Activated B cell treated with CpG ODN at 0.5 μM for 24 hours (primary cell): ENCODE measurements at regions of chr10 and their contacts with region 1.

Region 1: DNA sequence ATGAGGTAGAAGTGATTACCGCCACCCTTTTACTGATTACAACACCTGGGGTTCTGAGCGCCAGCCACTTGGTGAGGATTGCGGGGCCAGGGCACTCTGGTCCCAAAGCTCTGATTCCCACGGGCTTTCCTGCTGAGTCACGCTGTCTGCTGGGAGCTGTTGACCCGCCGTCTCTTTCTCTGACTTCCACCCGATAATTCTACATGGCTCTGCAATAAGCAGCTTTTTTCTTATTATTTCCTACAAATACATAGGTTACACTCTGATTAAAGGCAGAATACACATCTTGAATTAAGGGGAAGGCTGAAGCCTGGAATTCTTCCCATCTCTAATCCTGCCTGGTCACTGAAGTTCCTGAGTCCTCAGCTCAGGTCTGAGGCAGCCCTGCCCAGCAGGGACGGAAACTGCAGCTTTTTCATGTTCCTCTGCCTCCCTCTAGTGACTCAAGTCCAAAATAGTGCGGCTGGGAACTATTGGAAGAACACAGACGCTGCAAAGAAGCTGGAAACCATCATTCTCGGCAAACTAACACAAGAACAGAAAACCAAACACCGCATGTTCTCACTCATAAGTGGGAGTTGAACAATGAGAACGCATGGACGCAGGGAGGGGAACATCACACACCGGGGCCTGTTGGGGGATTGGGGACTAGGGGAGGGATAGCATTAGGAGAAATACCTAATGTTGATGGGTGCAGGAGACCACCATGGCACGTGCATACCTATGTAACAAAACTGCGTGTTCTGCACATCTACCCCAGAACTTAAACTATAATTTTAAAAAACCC is 178.3 kb downstream of the PRKCQ start:
- DNase-seq: no peak
- ATAC-seq: peak; percentile 93
- H3K4me3 Mint-ChIP-seq: peak overlapping the region; percentile 75
- H3K27ac Mint-ChIP-seq: no peak overlapping the region
- H3K4me1 Mint-ChIP-seq: peaks cover 33% of the 10 kb centered on the region
- H3K27me3 Mint-ChIP-seq: peaks cover 6% of the 10 kb centered on the region
- CTCF ChIP-seq: peak; percentile 57

Region 2: DNA sequence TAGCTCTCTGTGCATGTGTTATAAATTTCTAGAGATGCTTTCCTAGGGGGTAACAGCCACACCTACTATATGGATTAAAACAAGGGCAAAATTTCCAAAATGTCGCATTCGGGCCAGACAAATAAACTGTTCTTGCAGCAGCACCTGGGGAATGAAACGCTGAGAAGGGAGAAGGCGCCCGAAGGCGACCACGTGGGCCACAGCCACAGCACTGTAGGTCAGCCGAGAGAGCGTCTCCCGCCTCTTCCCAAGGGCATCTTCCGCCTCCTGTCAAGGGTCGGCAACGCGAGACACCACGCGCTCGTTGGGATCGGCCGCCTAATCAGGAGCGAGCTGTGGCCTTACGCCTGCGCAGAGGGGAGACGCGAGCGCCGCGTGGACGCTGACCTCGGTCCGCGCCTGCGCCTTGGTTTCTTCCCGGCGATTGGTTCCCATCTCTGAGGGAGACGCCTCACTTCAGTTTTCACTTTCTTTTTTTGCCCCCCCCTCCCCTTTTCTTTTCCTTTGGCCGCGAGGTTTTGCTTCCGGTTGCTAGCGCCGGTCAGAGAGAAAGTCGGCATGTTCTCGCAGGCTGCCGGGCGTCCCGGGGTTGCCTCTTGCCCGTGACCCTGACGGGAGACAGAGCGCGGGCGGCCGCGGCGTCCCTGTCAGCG is 717.3 kb before region 1 on chr10 and contains the start of gene TASOR2:
- CTCF ChIA-PET with region 1: no interaction called
- POLR2A ChIA-PET with region 1: no interaction called
- intact Hi-C with region 1: no loop called
- DNase-seq: peak; percentile 94
- ATAC-seq: peak; percentile 83
- H3K4me3 Mint-ChIP-seq: peak within 1 kb of the TSS; percentile 99
- H3K27ac Mint-ChIP-seq: peak within 1 kb of the TSS; percentile 94
- H3K4me1 Mint-ChIP-seq: peaks cover 44% of the 10 kb centered on the region
- H3K27me3 Mint-ChIP-seq: no peaks in the 10 kb centered on the region
- CTCF ChIP-seq: no peak
- total RNA-seq, gene TASOR2: 69.8 and 81.4 TPM in 2 replicates

Region 3: DNA sequence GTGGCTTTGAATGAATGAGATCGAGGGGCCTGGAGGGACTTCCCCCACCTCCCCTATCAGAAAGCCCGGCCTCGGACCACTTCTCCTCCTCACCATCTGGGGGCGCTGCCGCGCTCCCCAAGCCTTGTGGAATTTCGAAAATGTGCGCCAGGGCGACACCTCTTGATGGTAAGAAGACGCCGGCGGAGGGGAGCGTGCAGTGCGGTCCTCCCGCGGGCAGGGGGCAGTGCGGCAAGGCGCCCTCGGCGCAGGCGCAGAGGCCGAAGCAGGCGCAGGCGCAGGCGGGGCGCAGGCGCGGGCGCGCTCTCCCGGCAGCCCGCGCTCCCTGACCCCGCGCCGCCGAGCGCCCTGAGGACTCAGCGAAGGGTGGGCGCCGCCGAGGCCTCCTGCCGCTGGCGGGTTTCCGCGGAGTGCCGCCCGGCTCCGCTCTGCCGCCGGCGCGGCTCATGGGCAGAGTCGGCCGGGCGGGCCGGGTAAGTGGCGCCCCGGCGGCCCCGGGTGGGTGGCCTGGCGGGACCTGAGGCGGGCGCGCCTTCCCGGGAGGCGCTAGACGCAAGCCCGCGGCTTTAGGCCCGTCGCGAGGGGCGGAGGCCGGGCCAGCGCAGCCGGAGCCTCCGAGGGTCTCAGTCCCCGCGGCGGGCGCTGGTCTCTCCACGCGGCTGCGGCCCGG is 312.9 kb before region 1 on chr10 and contains the start of gene RBM17:
- CTCF ChIA-PET with region 1: interaction called, 6 read pairs
- POLR2A ChIA-PET with region 1: interaction called, 4 read pairs
- intact Hi-C with region 1: loop called (anchors 1 kb)
- DNase-seq: peak; percentile 99
- ATAC-seq: peak; percentile 85
- H3K4me3 Mint-ChIP-seq: peak within 1 kb of the TSS; percentile 97
- H3K27ac Mint-ChIP-seq: peak within 1 kb of the TSS; percentile 87
- H3K4me1 Mint-ChIP-seq: peaks cover 69% of the 10 kb centered on the region
- H3K27me3 Mint-ChIP-seq: no peaks in the 10 kb centered on the region
- CTCF ChIP-seq: peak; percentile 99
- total RNA-seq, gene RBM17: 207 and 209 TPM in 2 replicates

Region 4: GRCh38 chr10:6144406-6145165 is 257.2 kb before region 1 on chr10:
- CTCF ChIA-PET with region 1: interaction called, 3 read pairs
- POLR2A ChIA-PET with region 1: interaction called, 3 read pairs
- intact Hi-C with region 1: loop called (anchors 1 kb)
- DNase-seq: peak; percentile 85
- ATAC-seq: peak; percentile 86
- H3K4me3 Mint-ChIP-seq: peak overlapping the region; percentile 88
- H3K27ac Mint-ChIP-seq: peak overlapping the region; percentile 77
- H3K4me1 Mint-ChIP-seq: peaks cover 66% of the 10 kb centered on the region
- H3K27me3 Mint-ChIP-seq: no peaks in the 10 kb centered on the region
- CTCF ChIP-seq: no peak

Region 5: GRCh38 chr10:6202684-6203330 is 198.9 kb before region 1 on chr10 and contains the start of gene PFKFB3:
- CTCF ChIA-PET with region 1: interaction called, 295 read pairs
- POLR2A ChIA-PET with region 1: interaction called, 245 read pairs
- intact Hi-C with region 1: loop called (anchors 1 kb)
- DNase-seq: peak; percentile 96
- ATAC-seq: peak; percentile 72
- H3K4me3 Mint-ChIP-seq: peak within 1 kb of the TSS; percentile 97
- H3K27ac Mint-ChIP-seq: peak within 1 kb of the TSS; percentile 82
- H3K4me1 Mint-ChIP-seq: peaks cover 33% of the 10 kb centered on the region
- H3K27me3 Mint-ChIP-seq: no peaks in the 10 kb centered on the region
- CTCF ChIP-seq: no peak
- total RNA-seq, gene PFKFB3: 96.7 and 105 TPM in 2 replicates

Region 6: DNA sequence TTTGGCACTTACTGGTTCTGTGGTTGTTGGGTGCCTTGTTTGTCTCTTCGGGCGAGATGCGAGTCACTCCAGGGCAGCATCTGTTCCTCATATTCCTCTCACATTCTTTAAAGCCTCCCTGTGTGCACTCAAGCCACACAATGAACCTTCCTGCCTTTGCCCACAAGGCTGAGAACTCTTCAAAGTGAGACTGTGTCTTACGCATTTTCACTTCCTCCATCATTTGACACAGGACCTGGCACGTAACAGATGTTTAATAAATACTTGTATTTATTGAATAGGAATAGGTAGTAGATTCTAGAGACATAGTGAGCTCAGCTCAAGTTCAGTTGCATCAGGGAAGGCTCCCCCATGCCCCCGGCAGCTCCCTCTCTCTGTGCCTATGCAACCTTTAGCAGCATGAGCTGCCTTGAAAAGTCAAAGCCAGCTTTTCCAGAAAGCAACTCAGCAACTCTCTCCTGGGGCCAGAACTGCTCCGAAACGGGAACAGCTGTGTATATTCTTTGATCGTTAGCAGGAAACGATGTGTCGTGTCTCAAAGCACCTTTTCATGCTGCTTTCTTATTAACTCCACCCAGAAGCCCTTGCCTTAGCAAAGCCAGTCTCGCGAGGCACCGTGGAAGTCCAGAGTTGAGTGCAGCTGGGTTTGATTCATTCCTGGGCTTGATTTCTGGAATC is 101.5 kb before region 1 on chr10:
- CTCF ChIA-PET with region 1: interaction called, 19 read pairs
- POLR2A ChIA-PET with region 1: interaction called, 15 read pairs
- intact Hi-C with region 1: loop called (anchors 1 kb)
- DNase-seq: peak; percentile 48
- ATAC-seq: peak; percentile 80
- H3K4me3 Mint-ChIP-seq: peak overlapping the region; percentile 75
- H3K27ac Mint-ChIP-seq: peak overlapping the region; percentile 96
- H3K4me1 Mint-ChIP-seq: peaks cover 82% of the 10 kb centered on the region
- H3K27me3 Mint-ChIP-seq: no peaks in the 10 kb centered on the region
- CTCF ChIP-seq: no peak

Region 7: GRCh38 chr10:6348096-6348874 is 53.5 kb before region 1 on chr10:
- CTCF ChIA-PET with region 1: interaction called, 90 read pairs
- POLR2A ChIA-PET with region 1: interaction called, 95 read pairs
- intact Hi-C with region 1: loop called (anchors 1 kb)
- DNase-seq: peak; percentile 65
- ATAC-seq: peak; percentile 91
- H3K4me3 Mint-ChIP-seq: peak overlapping the region; percentile 80
- H3K27ac Mint-ChIP-seq: peak overlapping the region; percentile 97
- H3K4me1 Mint-ChIP-seq: peaks cover 57% of the 10 kb centered on the region
- H3K27me3 Mint-ChIP-seq: no peaks in the 10 kb centered on the region
- CTCF ChIP-seq: no peak

Region 8: GRCh38 chr10:6423004-6423403 is 21.2 kb after region 1 on chr10:
- CTCF ChIA-PET with region 1: no interaction called
- POLR2A ChIA-PET with region 1: no interaction called
- intact Hi-C with region 1: no loop called
- DNase-seq: no peak
- ATAC-seq: no peak
- H3K4me3 Mint-ChIP-seq: no peak overlapping the region
- H3K27ac Mint-ChIP-seq: no peak overlapping the region
- H3K4me1 Mint-ChIP-seq: no peaks in the 10 kb centered on the region
- H3K27me3 Mint-ChIP-seq: peaks cover 4% of the 10 kb centered on the region
- CTCF ChIP-seq: no peak

Region 9: DNA sequence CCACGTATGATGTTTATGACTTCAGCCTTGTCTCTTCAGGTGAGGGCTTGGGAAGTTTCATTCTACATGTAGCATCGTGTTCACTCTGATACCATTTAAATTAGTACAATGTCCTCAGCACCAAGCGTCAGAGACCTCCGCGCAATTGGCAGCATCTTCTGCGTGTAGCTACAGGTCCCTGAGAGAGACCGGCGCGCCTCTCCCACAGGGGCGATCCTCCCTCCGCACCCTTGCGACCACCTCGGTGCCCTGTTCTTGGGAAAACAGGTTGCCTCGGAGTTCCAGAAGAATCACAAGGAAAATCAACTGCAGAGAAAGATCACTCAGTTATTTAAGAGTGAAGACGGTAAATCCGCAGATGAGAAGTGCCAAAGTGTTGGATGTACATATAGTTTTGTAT is 1858.9 kb after region 1 on chr10:
- CTCF ChIA-PET with region 1: no interaction called
- POLR2A ChIA-PET with region 1: no interaction called
- intact Hi-C with region 1: no loop called
- DNase-seq: no peak
- ATAC-seq: no peak
- H3K4me3 Mint-ChIP-seq: no peak overlapping the region
- H3K27ac Mint-ChIP-seq: no peak overlapping the region
- H3K4me1 Mint-ChIP-seq: no peaks in the 10 kb centered on the region
- H3K27me3 Mint-ChIP-seq: no peaks in the 10 kb centered on the region
- CTCF ChIP-seq: no peak